Transverse colon (tissue), 4 donors: ENCODE measurements at regions of chrX and their contacts with region 1.

Region 1: DNA sequence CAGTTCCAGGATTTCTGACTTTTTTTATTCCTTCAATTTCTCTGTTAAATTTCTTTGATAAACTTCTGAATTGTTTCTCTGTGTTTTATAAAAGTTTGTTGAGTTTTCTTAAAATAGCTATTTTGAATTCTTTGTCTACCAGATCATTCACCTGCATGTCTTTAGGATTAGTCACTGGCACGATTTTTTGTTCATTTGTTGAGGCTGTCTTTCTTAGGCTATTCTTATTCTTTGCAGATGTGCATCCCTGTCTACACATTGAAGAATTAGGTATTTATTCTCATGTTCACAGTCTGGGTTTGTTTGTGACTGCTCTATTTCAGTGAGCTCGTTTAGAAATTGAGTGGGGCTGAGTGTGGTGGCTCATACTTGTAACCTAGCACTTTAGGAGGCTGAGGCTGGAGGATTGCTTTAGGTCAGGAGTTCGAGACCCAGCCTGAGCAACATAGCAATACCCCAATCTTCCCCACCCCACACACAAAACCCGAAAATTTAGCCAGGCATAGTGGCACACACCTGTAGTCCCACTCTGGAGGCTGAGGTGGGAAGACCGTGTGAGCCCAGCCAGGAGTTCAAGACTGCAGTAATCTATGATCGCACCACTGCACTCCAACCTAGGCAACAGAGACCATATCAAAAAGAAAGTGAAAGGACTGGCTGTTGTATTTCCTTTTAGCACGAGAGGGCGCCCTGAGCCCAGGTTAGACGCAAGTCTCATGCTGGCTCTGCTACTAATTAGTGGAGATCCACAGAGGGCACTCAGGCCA is 42.0 kb downstream of the F8 start:
- DNase-seq: peak; percentile 82
- H3K4me3 ChIP-seq: peak overlapping the region in 1 of 4 donors; percentile 41
- H3K27ac ChIP-seq: no peak overlapping the region
- H3K4me1 ChIP-seq: peaks cover 0 to 4% (median 0%) of the 10 kb centered on the region in 4 donors
- H3K27me3 ChIP-seq: no peaks in the 10 kb centered on the region
- CTCF ChIP-seq: peak; percentile 57 to 78 (median 61)
- EP300 ChIP-seq: no peak
- POLR2A ChIP-seq: no peak

Region 2: GRCh38 chrX:155068165-155068564 is 87.7 kb after region 1 on chrX:
- in situ Hi-C with region 1: loop called in 2 of 4 experiments (anchors 10 kb)
- intact Hi-C with region 1: no loop called
- DNase-seq: no peak
- H3K4me3 ChIP-seq: no peak overlapping the region
- H3K27ac ChIP-seq: no peak overlapping the region
- H3K4me1 ChIP-seq: peaks cover 0 to 29% (median 4%) of the 10 kb centered on the region in 4 donors
- H3K27me3 ChIP-seq: no peaks in the 10 kb centered on the region
- CTCF ChIP-seq: no peak
- EP300 ChIP-seq: no peak
- POLR2A ChIP-seq: no peak

Region 3: GRCh38 chrX:155094468-155095061 is 114.1 kb after region 1 on chrX:
- in situ Hi-C with region 1: loop called in 1 of 4 experiments (anchors 25 kb)
- intact Hi-C with region 1: no loop called
- DNase-seq: no peak
- H3K4me3 ChIP-seq: no peak overlapping the region
- H3K27ac ChIP-seq: no peak overlapping the region
- H3K4me1 ChIP-seq: no peaks in the 10 kb centered on the region
- H3K27me3 ChIP-seq: no peaks in the 10 kb centered on the region
- CTCF ChIP-seq: peak; percentile 32 to 58 (median 47)
- EP300 ChIP-seq: no peak
- POLR2A ChIP-seq: no peak